Dorsolateral prefrontal cortex (tissue), 120 donors: ENCODE measurements at regions of chr15 and their contacts with region 1.

Region 1: GRCh38 chr15:69475769-69476358 is 23.2 kb downstream of the RPLP1 start:
- DNase-seq: peak; percentile 66 to 87 (median 82)
- H3K4me3 ChIP-seq: no peak overlapping the region
- H3K27ac ChIP-seq: no peak overlapping the region
- H3K27me3 ChIP-seq: no peaks in the 10 kb centered on the region
- CTCF ChIP-seq: peak; percentile 71 to 97 (median 93)

Region 2: DNA sequence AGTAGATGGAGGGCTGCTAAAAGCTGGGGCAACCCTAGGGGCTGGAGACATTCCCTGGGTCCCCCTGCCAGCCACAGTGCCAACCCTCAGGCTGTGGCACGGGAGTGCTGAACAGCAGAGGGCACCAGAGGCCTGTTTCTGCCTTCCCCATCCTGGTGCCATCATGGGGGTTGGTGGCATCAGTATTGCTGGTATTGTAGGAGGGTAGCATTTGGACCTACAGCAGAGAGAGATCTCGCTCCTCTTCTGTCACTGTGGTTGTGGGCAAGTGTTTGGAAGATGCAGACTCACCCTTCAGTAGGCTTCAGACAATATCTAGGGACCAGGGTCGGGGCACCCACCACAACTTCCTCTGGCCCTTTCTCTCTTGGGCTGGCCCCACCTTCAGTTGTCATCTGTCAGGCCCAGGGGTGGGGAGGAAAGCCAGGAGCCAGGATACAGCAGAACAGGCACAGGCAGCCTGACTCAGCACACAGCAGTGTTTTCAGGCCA is 100.2 kb after region 1 on chr15:
- intact Hi-C with region 1: loop called in 1 of 2 experiments (anchors 2 kb)
- DNase-seq: peak; percentile 19 to 80 (median 60)
- H3K4me3 ChIP-seq: no peak overlapping the region
- H3K27ac ChIP-seq: no peak overlapping the region
- H3K27me3 ChIP-seq: peaks cover 0 to 9% (median 0%) of the 10 kb centered on the region in 45 donors
- CTCF ChIP-seq: peak; percentile 19 to 90 (median 76)

Region 3: GRCh38 chr15:69893863-69894262 is 418.0 kb after region 1 on chr15:
- intact Hi-C with region 1: no loop called
- DNase-seq: peak; percentile 5 to 83 (median 74)
- H3K4me3 ChIP-seq: no peak overlapping the region
- H3K27ac ChIP-seq: peak overlapping the region in 2 of 59 donors; percentile 24 to 37
- H3K27me3 ChIP-seq: peaks cover 0 to 5% (median 0%) of the 10 kb centered on the region in 45 donors
- CTCF ChIP-seq: peak in 5 of 56 donors; percentile 4 to 40 (median 24)

Region 4: GRCh38 chr15:70466895-70467529 is 991.1 kb after region 1 on chr15:
- intact Hi-C with region 1: loop called in 1 of 2 experiments (anchors 5 kb)
- DNase-seq: peak in 8 of 10 donors; percentile 45 to 76 (median 60)
- H3K4me3 ChIP-seq: no peak overlapping the region
- H3K27ac ChIP-seq: no peak overlapping the region
- H3K27me3 ChIP-seq: peaks cover 0 to 28% (median 0%) of the 10 kb centered on the region in 45 donors
- CTCF ChIP-seq: peak; percentile 24 to 75 (median 58)

Region 5: DNA sequence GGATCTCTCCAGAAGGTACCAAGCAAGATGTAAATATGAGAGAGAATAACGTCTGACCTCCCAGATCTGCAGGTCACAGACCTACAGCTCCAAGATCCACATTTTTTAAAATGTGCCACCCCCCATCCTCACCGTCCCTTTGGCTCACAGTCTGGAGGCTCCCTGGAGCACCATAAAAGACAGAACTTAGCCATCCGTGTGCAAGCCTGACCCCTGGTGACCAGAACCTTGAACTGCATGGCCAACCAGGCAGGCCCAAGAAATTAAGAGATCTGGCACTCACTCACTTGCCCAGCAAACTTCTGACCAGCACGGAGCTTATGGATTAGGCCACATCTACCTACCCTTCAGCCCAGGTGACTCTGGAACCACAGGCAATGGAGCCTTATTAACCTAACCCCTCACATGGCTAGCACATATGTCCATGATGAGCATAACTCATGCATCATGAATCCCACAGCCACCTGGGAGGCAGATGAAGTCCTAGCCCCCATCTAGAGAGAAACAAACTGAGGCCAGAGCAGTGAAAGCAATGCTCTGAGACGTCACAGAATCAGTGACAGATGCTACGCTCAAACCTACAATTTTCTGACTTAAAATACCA is 1012.2 kb after region 1 on chr15:
- intact Hi-C with region 1: loop called (anchors 2 to 5 kb)
- DNase-seq: peak; percentile 51 to 85 (median 72)
- H3K4me3 ChIP-seq: no peak overlapping the region
- H3K27ac ChIP-seq: no peak overlapping the region
- H3K27me3 ChIP-seq: no peaks in the 10 kb centered on the region
- CTCF ChIP-seq: peak; percentile 80 to 99 (median 95)

Region 6: DNA sequence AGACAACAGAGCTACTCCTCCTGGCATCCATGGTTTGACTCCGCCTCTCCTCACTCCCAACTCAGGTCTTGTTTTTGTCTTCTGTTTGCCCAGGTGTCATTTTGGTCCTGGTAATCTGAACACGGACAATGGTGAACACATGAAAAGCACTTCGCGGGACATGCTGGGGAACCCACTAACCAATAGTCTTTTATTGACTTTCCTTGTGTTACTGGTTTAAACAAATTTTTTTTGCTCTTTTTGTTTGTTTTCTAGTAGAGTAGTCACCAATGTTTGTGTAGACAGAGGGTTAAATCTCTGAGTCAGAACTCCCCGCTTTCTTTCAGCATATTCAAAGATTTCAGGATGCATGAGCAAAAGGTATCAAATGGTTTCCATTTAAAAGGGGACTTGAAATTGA is 1339.8 kb after region 1 on chr15:
- intact Hi-C with region 1: loop called in 1 of 2 experiments (anchors 10 kb)
- DNase-seq: no peak
- H3K4me3 ChIP-seq: no peak overlapping the region
- H3K27ac ChIP-seq: no peak overlapping the region
- H3K27me3 ChIP-seq: no peaks in the 10 kb centered on the region
- CTCF ChIP-seq: no peak